Endothelial cell of umbilical vein (primary cell): ENCODE measurements at regions of chr2 and their contacts with region 1.

Region 1: GRCh38 chr2:1750933-1751766 is 6.8 kb upstream of the PXDN start:
- DNase-seq: peak; percentile 68
- H3K4me3 ChIP-seq: no peak overlapping the region
- H3K27ac ChIP-seq: no peak overlapping the region
- H3K4me1 ChIP-seq: peaks cover 3% of the 10 kb centered on the region
- H3K27me3 ChIP-seq: peaks cover 0 to 4% of the 10 kb centered on the region in 2 experiments
- CTCF ChIP-seq: peak; percentile 80 to 96
- POLR2A ChIP-seq: no peak

Region 2: GRCh38 chr2:1569879-1570450 is 181.2 kb before region 1 on chr2:
- CTCF ChIA-PET with region 1: no interaction called
- POLR2A ChIA-PET with region 1: no interaction called
- dilution Hi-C with region 1: no loop called
- intact Hi-C with region 1: no loop called
- DNase-seq: no peak
- H3K4me3 ChIP-seq: no peak overlapping the region
- H3K27ac ChIP-seq: no peak overlapping the region
- H3K4me1 ChIP-seq: no peaks in the 10 kb centered on the region
- H3K27me3 ChIP-seq: no peaks in the 10 kb centered on the region
- CTCF ChIP-seq: no peak
- POLR2A ChIP-seq: no peak

Region 3: DNA sequence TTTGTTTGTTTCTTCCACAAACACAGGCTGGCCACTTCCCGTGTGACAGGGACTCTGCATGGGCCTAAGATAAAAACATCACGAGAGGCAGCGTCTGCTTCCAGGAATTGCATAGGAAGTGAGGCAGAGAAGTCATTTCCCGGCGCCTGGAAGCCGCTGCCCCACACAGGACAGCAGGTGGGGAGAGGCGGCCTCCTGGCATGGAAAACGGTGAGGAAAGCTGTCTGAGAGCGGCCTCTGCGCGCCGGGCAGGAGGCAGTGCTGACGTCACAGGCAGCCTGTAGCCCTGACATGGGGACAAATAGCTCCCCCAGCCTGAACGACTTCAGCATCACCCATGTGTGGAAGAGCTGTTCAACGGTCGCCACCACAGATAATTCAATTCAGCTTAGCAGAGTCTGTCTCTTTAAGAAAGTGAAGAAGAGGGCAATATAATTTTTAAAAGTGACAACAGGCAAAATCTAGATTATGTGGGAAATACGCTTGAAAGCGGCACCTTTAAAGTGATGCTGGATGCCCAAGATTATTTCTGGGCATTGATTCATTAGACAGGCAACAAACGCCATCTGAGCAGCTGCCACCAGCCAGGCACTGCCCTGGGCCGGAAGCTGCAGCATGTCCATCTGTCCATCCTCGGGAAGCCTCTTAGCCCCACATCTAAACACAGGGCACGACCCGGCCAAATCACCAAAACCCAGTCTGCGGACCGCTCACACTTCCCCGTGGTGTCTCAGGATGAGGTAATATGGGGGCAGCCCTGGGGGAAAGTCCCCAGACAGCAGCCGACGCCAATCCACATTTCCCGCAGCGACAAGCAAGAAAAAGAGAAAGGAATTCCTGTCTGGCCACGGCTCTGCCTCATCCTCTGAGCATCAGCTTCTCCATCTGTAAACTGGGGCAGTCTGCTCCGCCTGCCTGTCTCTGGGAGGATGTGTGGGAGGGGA is 145.8 kb before region 1 on chr2:
- CTCF ChIA-PET with region 1: interaction called, 14 read pairs
- POLR2A ChIA-PET with region 1: no interaction called
- dilution Hi-C with region 1: no loop called
- intact Hi-C with region 1: no loop called
- DNase-seq: peak; percentile 57
- H3K4me3 ChIP-seq: no peak overlapping the region
- H3K27ac ChIP-seq: peak overlapping the region; percentile 80
- H3K4me1 ChIP-seq: peaks cover 29% of the 10 kb centered on the region
- H3K27me3 ChIP-seq: peaks cover 0 to 2% of the 10 kb centered on the region in 2 experiments
- CTCF ChIP-seq: no peak
- POLR2A ChIP-seq: no peak

Region 4: DNA sequence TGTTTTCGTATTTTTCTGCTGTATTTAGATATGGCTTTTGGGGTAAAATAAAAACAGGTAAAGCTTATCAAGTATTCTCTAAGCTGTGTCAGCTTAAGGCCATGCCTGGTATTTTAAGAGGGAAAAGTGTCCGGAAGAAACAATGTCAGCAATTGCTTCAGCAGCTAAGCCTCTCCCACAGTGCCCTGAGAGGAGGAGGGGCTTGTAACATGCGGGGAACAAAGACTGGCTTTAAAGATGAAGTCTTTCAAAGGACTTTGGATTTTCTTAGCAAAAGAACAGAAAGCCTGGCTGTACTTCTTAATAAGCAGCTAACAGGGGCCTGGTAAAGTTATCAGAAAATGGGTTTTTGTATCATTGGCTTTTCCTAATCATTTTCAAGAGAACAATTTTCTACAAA is 109.6 kb before region 1 on chr2:
- CTCF ChIA-PET with region 1: interaction called, 14 read pairs
- POLR2A ChIA-PET with region 1: no interaction called
- dilution Hi-C with region 1: no loop called
- intact Hi-C with region 1: no loop called
- DNase-seq: peak; percentile 19
- H3K4me3 ChIP-seq: no peak overlapping the region
- H3K27ac ChIP-seq: no peak overlapping the region
- H3K4me1 ChIP-seq: peaks cover 2% of the 10 kb centered on the region
- H3K27me3 ChIP-seq: no peaks in the 10 kb centered on the region
- CTCF ChIP-seq: no peak
- POLR2A ChIP-seq: no peak

Region 5: GRCh38 chr2:1685957-1686784 is 65.0 kb before region 1 on chr2:
- CTCF ChIA-PET with region 1: interaction called, 19 read pairs
- POLR2A ChIA-PET with region 1: no interaction called
- dilution Hi-C with region 1: no loop called
- intact Hi-C with region 1: no loop called
- DNase-seq: peak; percentile 8
- H3K4me3 ChIP-seq: no peak overlapping the region
- H3K27ac ChIP-seq: peak overlapping the region; percentile 21
- H3K4me1 ChIP-seq: peaks cover 9% of the 10 kb centered on the region
- H3K27me3 ChIP-seq: no peaks in the 10 kb centered on the region
- CTCF ChIP-seq: no peak
- POLR2A ChIP-seq: no peak

Region 6: GRCh38 chr2:1730015-1730927 is 20.9 kb before region 1 on chr2:
- CTCF ChIA-PET with region 1: interaction called, 13 read pairs
- POLR2A ChIA-PET with region 1: no interaction called
- dilution Hi-C with region 1: no loop called
- intact Hi-C with region 1: no loop called
- DNase-seq: peak; percentile 54
- H3K4me3 ChIP-seq: peak overlapping the region in 1 of 3 experiments; percentile 5
- H3K27ac ChIP-seq: peak overlapping the region; percentile 65
- H3K4me1 ChIP-seq: peaks cover 19% of the 10 kb centered on the region
- H3K27me3 ChIP-seq: no peaks in the 10 kb centered on the region
- CTCF ChIP-seq: no peak
- POLR2A ChIP-seq: no peak

Region 7: GRCh38 chr2:1886405-1886992 is 135.3 kb after region 1 on chr2:
- CTCF ChIA-PET with region 1: no interaction called
- POLR2A ChIA-PET with region 1: no interaction called
- dilution Hi-C with region 1: no loop called
- intact Hi-C with region 1: no loop called
- DNase-seq: peak; percentile 21
- H3K4me3 ChIP-seq: no peak overlapping the region
- H3K27ac ChIP-seq: no peak overlapping the region
- H3K4me1 ChIP-seq: no peaks in the 10 kb centered on the region
- H3K27me3 ChIP-seq: no peaks in the 10 kb centered on the region
- CTCF ChIP-seq: peak; percentile 59 to 60
- POLR2A ChIP-seq: no peak